ENCODE measurements at regions of chr5 and their contacts with region 1.

Region 1: GRCh38 chr5:135560858-135561257 is 17.9 kb downstream of the CXCL14 start:
- DNase-seq: peak; percentile 38 to 46
- ATAC-seq: peak; percentile 66 to 80
- H3K4me3 ChIP-seq: no peak overlapping the region
- H3K27ac ChIP-seq: no peak overlapping the region
- H3K4me1 ChIP-seq: no peaks in the 10 kb centered on the region
- H3K27me3 ChIP-seq: peaks cover 0 to 15% (median 0%) of the 10 kb centered on the region in 3 donors
- CTCF ChIP-seq: peak; percentile 10 to 75 (median 60)
- POLR2A ChIP-seq: no peak

Region 2: DNA sequence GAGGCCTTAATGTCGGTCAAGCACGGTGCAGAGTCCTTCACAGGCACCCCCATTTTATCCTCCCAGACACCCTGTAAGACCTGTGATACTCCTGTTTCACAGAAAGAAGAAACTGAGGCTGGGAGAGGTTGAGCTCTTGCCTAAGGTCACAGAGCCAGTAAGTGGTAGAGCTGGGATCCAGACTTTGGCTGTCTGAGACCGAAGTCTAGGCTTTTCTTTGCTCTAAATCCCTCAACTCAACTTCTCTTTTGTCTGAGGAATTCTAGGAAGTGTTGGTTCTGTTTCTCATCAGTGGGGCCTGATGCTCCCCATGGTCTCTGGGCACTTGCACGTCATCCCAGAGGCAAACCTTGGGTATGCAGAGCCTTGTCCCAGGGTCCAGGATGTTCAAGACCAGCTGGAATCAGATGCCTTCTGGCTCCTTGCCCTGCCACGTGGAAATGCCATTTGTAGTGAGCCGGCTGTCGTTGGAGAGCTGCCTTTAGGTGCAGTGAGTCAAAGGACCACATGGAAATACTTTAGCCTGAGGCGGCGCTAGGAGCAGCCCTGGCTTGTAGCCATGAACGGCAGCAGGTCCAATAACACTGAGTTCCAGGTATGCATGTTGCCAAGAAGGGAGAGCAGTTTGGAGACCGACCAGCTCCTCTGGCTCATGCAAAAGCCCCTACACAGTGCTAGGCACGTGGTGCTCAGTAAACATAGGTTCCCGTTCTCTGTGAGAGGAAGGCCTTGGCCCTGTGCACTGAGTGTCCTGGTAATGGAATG is 122.9 kb before region 1 on chr5:
- in situ Hi-C with region 1: no loop called
- intact Hi-C with region 1: no loop called
- DNase-seq: peak; percentile 92 to 93
- ATAC-seq: peak; percentile 71 to 73
- H3K4me3 ChIP-seq: no peak overlapping the region
- H3K27ac ChIP-seq: peak overlapping the region; percentile 33 to 75 (median 62)
- H3K4me1 ChIP-seq: peaks cover 29 to 41% of the 10 kb centered on the region in 2 donors
- H3K27me3 ChIP-seq: no peaks in the 10 kb centered on the region
- CTCF ChIP-seq: no peak
- POLR2A ChIP-seq: no peak

Region 3: GRCh38 chr5:135729321-135729786 is 168.5 kb after region 1 on chr5:
- in situ Hi-C with region 1: no loop called
- intact Hi-C with region 1: loop called (anchors 2 kb)
- DNase-seq: no peak
- ATAC-seq: no peak
- H3K4me3 ChIP-seq: no peak overlapping the region
- H3K27ac ChIP-seq: no peak overlapping the region
- H3K4me1 ChIP-seq: no peaks in the 10 kb centered on the region
- H3K27me3 ChIP-seq: no peaks in the 10 kb centered on the region
- CTCF ChIP-seq: peak in 1 of 5 experiments; percentile 15
- POLR2A ChIP-seq: no peak

Region 4: DNA sequence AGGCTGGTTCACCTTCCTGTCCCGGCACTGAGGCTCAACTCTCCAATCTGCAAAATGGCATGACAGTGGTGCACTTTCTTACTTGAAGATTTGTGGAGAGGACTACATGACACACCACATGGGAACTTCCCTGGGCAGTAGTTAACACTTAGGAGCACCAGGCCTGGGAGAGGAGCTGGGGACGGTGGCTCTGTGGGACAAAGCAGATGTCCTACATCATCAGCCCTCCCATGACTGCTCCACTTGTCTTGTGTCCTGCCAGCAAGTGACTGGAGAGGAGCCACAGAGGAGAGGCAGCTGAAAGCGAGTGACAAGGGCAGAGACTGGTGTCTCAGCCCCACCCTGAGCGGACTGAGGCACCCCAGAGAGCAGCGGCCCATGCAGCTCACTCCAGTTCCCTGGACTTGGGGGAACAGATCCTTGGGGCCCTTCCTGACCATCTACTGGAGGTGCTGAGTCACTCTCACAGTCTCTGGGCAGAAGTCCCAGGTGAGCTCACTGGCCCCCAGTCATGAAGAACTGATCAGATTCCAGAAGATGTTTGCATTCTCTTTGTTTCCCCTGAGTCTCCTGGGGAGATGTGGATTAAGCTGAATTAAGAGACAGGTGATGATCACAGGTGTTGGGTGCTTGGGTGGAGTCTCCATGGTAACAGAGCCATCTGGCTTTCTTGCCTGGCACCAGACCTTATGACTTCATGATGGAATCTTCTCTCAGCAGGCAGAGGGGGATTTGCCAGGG is 260.4 kb after region 1 on chr5:
- in situ Hi-C with region 1: loop called in 2 of 4 experiments (anchors 5 to 25 kb)
- intact Hi-C with region 1: no loop called
- DNase-seq: no peak
- ATAC-seq: no peak
- H3K4me3 ChIP-seq: no peak overlapping the region
- H3K27ac ChIP-seq: no peak overlapping the region
- H3K4me1 ChIP-seq: no peaks in the 10 kb centered on the region
- H3K27me3 ChIP-seq: no peaks in the 10 kb centered on the region
- CTCF ChIP-seq: no peak
- POLR2A ChIP-seq: no peak

Region 5: DNA sequence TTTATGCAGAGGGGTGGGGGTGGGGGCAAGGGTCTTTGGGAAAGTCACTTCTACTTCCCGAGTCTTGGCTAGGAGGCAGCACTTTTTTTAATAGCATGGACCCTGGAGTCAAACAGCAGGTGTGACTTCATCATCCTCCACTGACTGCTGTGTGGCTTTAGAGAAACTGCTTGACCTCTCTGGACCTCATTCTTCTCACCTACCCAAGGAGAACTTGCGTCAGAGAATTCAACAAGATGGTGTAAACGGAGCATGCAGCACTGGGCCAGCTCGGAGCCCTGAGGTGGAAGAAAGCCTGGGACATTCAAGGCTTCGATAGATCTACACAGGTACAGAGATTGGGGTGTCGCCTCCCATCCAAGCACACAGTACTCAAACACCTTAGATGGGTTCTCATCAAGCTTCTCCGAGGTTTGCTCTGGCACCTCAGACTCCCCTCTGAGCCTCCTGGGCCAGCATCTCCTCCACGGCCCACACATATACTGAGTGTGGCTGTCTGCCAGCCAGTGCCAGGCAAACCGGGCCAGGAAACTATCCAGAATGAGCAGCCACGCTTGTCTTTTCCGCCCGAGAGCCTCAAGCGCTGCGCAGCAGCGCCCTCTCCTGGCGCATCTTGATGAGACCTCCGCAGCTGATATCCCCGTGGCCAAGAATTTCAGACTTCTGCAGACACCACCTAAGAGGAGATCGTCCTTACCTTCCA is 269.0 kb after region 1 on chr5:
- in situ Hi-C with region 1: loop called in 3 of 4 experiments (anchors 5 to 25 kb)
- intact Hi-C with region 1: loop called (anchors 1 kb)
- DNase-seq: peak in 1 of 2 donors; percentile 39
- ATAC-seq: peak; percentile 18 to 56
- H3K4me3 ChIP-seq: no peak overlapping the region
- H3K27ac ChIP-seq: no peak overlapping the region
- H3K4me1 ChIP-seq: peaks cover 0 to under 1% of the 10 kb centered on the region in 2 donors
- H3K27me3 ChIP-seq: peaks cover 0 to 11% (median 4%) of the 10 kb centered on the region in 3 donors
- CTCF ChIP-seq: peak; percentile 39 to 73 (median 64)
- POLR2A ChIP-seq: no peak

Measured in gastrocnemius medialis (tissue), 4 donors.